ENCODE measurements at regions of chr3 and their contacts with region 1.

Region 1: DNA sequence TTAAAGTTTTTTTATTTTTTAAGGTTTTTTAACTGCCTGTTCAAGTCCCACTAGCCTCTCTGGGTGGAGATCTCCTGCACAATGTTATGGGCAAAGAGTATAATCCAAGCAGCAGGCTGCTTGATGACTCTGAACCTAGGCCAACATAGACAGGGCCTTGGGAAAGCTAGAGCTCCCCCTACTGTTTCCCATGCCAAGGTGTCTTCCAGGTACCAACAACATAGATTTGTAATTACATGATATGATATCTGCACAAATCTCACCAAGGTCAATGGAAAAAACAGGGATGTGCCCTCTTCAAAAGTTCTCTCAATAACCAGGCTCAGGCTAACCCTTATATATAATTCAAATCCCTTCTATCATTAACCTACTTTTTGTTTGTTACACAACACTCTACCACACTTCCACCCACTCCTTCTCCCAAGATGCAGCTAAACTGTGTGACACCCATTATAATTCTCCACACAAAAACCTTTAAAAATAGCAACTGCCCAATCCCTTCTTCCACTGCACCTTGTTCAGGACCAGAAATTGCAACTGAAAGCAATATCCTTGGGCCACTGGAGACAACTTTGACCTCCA is 43.8 kb downstream of the RBM15B start:
- H3K4me3 ChIP-seq: no peak overlapping the region
- H3K27ac ChIP-seq: no peak overlapping the region
- H3K4me1 ChIP-seq: no peaks in the 10 kb centered on the region
- CTCF ChIP-seq: no peak

Region 2: DNA sequence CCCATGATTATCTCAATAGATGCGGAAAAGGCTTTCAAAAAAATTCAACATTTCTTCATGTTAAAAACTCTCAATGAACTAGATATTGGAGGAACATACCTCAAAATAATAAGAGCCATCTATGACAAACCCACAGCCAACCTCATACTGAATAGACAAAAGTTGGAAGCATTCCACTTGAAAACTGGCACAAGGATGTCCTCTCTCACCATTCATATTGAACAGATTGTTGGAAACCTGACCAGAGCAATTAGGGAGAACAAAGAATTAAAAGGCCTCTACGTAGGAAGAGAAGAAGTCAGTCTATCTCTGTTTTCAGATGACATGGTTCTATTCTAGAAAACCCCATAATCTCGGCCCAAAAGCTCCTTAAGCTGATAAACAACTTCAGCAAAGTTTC is 324.3 kb before region 1 on chr3:
- CTCF ChIA-PET with region 1: no interaction called
- POLR2A ChIA-PET with region 1: no interaction called
- H3K4me3 ChIP-seq: no peak overlapping the region
- H3K27ac ChIP-seq: no peak overlapping the region
- H3K4me1 ChIP-seq: no peaks in the 10 kb centered on the region
- CTCF ChIP-seq: no peak

Region 3: GRCh38 chr3:51282931-51283330 is 151.9 kb before region 1 on chr3:
- CTCF ChIA-PET with region 1: no interaction called
- POLR2A ChIA-PET with region 1: no interaction called
- H3K4me3 ChIP-seq: no peak overlapping the region
- H3K27ac ChIP-seq: no peak overlapping the region
- H3K4me1 ChIP-seq: no peaks in the 10 kb centered on the region
- CTCF ChIP-seq: no peak

Region 4: DNA sequence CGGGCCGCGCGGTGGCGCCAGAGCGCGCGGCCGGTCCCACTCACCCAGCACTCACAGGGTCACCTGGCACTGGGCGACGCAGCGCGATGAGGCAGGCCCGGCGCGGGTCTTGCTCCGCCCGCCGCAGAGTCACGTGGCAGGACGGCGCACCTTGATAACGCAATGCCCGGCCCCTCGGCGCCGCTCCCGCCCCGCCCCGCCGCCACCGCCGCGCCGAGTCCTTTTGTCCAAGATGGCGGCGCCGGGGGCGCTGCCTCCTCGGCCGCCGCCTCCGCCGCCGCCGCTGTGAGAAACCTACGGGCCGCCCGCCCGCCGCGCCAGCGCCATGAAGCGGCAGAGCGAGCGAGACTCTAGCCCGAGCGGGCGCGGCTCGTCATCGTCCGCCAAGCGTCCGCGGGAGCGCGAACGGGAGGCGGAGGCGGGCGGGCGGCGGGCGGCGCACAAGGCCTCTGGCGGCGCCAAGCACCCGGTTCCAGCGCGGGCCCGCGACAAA is 43.7 kb before region 1 on chr3 and contains the start of gene RBM15B:
- CTCF ChIA-PET with region 1: interaction called, 12 read pairs
- POLR2A ChIA-PET with region 1: no interaction called
- H3K4me3 ChIP-seq: peak within 1 kb of the TSS; percentile 82
- H3K27ac ChIP-seq: peak within 1 kb of the TSS; percentile 87
- H3K4me1 ChIP-seq: no peaks in the 10 kb centered on the region; the same call in 1 of the 2 replicates
- CTCF ChIP-seq: peak; percentile 90

Region 5: DNA sequence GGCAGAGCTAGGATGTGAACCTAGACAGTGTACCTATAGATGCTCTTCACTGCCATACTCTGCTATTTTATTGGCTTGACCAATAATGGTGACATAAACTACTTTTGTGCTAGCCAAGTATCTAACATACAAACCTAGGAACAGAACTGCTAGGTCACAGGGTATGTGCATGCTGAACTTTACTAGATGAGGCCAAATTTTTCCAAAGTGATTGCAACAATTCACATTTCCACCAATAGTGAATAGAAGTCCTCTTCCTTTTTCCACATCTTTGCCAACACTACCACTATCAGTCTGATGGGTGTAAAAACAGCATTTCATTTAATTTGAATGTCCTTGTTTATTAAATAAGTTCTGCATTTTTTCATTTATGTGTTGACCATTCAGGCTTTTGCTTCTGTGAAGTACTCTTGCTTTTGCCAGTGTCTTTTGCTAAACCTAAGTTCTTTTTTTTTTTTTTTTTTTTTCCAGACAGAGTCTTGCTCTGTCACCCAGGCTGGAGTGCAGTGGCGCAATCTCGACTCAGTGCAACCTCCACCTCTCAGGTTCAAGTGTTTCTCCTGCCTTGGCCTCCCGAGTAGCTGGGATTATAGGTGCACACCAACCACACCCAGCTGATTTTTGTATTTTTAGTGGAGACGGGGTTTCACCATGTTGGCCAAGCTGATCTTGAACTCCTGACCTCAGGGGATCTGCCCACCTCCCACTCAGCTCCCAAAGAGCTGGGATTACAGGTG is 10.9 kb after region 1 on chr3:
- CTCF ChIA-PET with region 1: interaction called, 11 read pairs
- POLR2A ChIA-PET with region 1: no interaction called
- H3K4me3 ChIP-seq: no peak overlapping the region
- H3K27ac ChIP-seq: no peak overlapping the region
- H3K4me1 ChIP-seq: no peaks in the 10 kb centered on the region
- CTCF ChIP-seq: no peak

Region 6: DNA sequence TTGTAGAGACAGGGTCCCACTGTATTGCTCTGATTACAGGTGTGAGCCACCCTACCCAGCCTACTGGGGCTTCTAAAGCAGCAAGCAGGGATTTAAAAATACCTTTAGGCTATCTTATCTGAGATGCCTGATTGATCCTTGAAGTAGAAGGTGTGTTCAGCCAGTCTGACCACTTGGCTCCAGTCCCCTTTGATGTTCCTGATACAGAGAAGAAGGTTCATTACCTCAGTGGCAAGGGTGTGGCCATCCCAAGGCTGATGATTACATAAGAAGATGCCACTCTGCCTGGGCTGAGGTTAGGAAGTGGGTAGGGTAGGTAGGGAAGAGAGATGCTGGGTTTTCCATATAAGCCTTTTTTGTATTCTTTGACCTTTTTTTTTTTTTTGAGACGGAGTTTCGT is 76.2 kb after region 1 on chr3:
- CTCF ChIA-PET with region 1: no interaction called
- POLR2A ChIA-PET with region 1: no interaction called
- H3K4me3 ChIP-seq: no peak overlapping the region
- H3K27ac ChIP-seq: no peak overlapping the region
- H3K4me1 ChIP-seq: no peaks in the 10 kb centered on the region
- CTCF ChIP-seq: no peak

Region 7: GRCh38 chr3:52036222-52036694 is 601.4 kb after region 1 on chr3:
- CTCF ChIA-PET with region 1: no interaction called
- POLR2A ChIA-PET with region 1: no interaction called
- H3K4me3 ChIP-seq: no peak overlapping the region
- H3K27ac ChIP-seq: no peak overlapping the region
- H3K4me1 ChIP-seq: no peaks in the 10 kb centered on the region
- CTCF ChIP-seq: no peak